ENCODE measurements at regions of chr1 and their contacts with region 1.

Region 1: GRCh38 chr1:35451125-35451528 is 106.1 kb downstream of the KIAA0319L start:
- DNase-seq: no peak
- ATAC-seq: peak; percentile 99
- H3K4me3 ChIP-seq: no peak overlapping the region
- H3K27ac ChIP-seq: no peak overlapping the region
- H3K4me1 ChIP-seq: no peaks in the 10 kb centered on the region
- H3K27me3 ChIP-seq: no peaks in the 10 kb centered on the region
- CTCF ChIP-seq: peak; percentile 87 to 90 (median 88)
- EP300 ChIP-seq: no peak
- POLR2A ChIP-seq: no peak
- RAD21 ChIP-seq: peak; percentile 97

Region 2: DNA sequence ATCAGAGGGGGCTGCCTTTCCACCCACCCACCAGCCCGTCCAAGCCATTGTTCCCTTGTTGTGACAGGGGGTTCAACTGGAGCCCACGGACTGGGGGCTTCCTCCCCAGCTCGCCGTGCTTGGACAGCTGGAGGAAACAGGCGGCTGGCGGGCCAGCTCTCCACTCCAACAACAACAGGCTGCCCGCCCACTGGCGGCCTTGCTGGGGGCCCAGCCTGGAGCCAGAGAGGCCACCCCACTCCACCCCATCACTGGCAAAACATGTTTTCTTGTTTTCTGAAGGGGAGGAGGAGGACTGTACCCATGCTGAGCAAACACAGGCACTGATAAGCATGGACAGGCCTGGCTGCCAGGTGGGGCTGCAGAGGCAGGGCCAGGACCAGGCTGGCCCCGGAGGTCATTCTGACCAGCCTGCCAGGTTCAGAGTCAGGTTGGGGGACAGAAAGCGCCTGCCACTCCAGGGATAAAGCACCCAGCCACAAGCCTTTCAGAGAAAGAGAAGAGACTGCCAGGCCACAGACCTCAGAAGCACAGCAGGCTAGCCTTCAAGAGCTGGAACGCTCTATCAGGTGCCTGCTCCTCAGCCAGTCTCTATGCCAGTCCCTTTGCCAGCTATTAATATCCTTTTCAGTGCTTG is 625.6 kb before region 1 on chr1:
- CTCF ChIA-PET with region 1: no interaction called
- POLR2A ChIA-PET with region 1: no interaction called
- RAD21 ChIA-PET with region 1: no interaction called
- SMC1A ChIA-PET with region 1: no interaction called
- in situ Hi-C with region 1: no loop called
- intact Hi-C with region 1: no loop called
- DNase-seq: no peak
- ATAC-seq: no peak
- H3K4me3 ChIP-seq: no peak overlapping the region
- H3K27ac ChIP-seq: no peak overlapping the region
- H3K4me1 ChIP-seq: no peaks in the 10 kb centered on the region
- H3K27me3 ChIP-seq: no peaks in the 10 kb centered on the region
- CTCF ChIP-seq: no peak
- EP300 ChIP-seq: no peak
- POLR2A ChIP-seq: no peak
- RAD21 ChIP-seq: no peak

Region 3: GRCh38 chr1:35215346-35215745 is 235.8 kb before region 1 on chr1:
- CTCF ChIA-PET with region 1: no interaction called
- POLR2A ChIA-PET with region 1: no interaction called
- RAD21 ChIA-PET with region 1: no interaction called
- SMC1A ChIA-PET with region 1: no interaction called
- in situ Hi-C with region 1: no loop called
- intact Hi-C with region 1: no loop called
- DNase-seq: no peak
- ATAC-seq: no peak
- H3K4me3 ChIP-seq: no peak overlapping the region
- H3K27ac ChIP-seq: no peak overlapping the region
- H3K4me1 ChIP-seq: no peaks in the 10 kb centered on the region
- H3K27me3 ChIP-seq: no peaks in the 10 kb centered on the region
- CTCF ChIP-seq: no peak
- EP300 ChIP-seq: no peak
- POLR2A ChIP-seq: no peak
- RAD21 ChIP-seq: no peak

Region 4: DNA sequence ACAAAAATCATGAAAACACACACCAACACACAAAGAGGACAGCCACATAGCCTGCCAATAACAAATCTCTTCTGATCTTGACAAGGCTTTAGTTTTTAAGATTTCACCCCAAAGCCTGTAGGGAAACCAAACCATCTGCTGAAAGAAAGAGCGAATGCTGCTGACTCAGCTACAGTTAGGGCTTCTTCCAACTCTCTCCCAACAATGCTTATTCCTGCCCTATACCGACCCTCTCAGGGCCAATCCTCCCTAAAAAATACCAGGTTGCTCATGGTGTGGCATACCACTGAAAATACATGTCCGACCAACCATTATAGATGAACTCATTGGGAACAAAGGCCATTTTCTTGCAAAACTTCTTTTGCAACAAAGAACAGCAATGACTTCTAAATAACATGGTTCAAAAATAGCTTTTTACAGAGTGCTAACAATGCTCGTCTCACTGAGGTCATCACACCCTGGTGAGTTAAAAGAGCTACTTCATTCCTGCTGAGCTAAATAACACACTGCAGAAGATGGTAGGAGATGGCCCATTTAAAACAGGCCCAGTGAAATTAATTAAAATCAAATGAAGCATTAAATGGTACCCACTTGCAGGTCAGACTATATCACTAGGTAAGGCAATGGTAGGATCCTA is 20.0 kb after region 1 on chr1:
- CTCF ChIA-PET with region 1: interaction called, 13 read pairs
- POLR2A ChIA-PET with region 1: interaction called, 3 read pairs
- RAD21 ChIA-PET with region 1: no interaction called
- SMC1A ChIA-PET with region 1: interaction called, 15 read pairs
- in situ Hi-C with region 1: no loop called
- intact Hi-C with region 1: no loop called
- DNase-seq: no peak
- ATAC-seq: no peak
- H3K4me3 ChIP-seq: no peak overlapping the region
- H3K27ac ChIP-seq: no peak overlapping the region
- H3K4me1 ChIP-seq: no peaks in the 10 kb centered on the region
- H3K27me3 ChIP-seq: no peaks in the 10 kb centered on the region
- CTCF ChIP-seq: no peak
- EP300 ChIP-seq: no peak
- POLR2A ChIP-seq: no peak
- RAD21 ChIP-seq: no peak

Region 5: GRCh38 chr1:35505908-35506798 is 55.0 kb after region 1 on chr1:
- CTCF ChIA-PET with region 1: interaction called, 34 read pairs
- POLR2A ChIA-PET with region 1: no interaction called
- RAD21 ChIA-PET with region 1: interaction called, 28 read pairs
- SMC1A ChIA-PET with region 1: interaction called, 44 read pairs
- in situ Hi-C with region 1: no loop called
- intact Hi-C with region 1: loop called (anchors 2 kb)
- DNase-seq: peak; percentile 95
- ATAC-seq: peak; percentile 84
- H3K4me3 ChIP-seq: peak overlapping the region; percentile 68; the same call in 1 of the 2 replicates
- H3K27ac ChIP-seq: peak overlapping the region; percentile 94
- H3K4me1 ChIP-seq: peaks cover 40% of the 10 kb centered on the region
- H3K27me3 ChIP-seq: no peaks in the 10 kb centered on the region
- CTCF ChIP-seq: no peak; a peak in 2 of 6 replicates
- EP300 ChIP-seq: peak in 1 of 2 experiments; percentile 62; a peak in 3 of 4 replicates
- POLR2A ChIP-seq: no peak; the same call in 1 of the 2 replicates
- RAD21 ChIP-seq: no peak

Region 6: GRCh38 chr1:35539073-35539823 is 88.1 kb after region 1 on chr1:
- CTCF ChIA-PET with region 1: interaction called, 260 read pairs
- POLR2A ChIA-PET with region 1: interaction called, 9 read pairs
- RAD21 ChIA-PET with region 1: interaction called, 139 read pairs
- SMC1A ChIA-PET with region 1: interaction called, 254 read pairs
- in situ Hi-C with region 1: no loop called
- intact Hi-C with region 1: no loop called
- DNase-seq: peak; percentile 75
- ATAC-seq: peak; percentile 73
- H3K4me3 ChIP-seq: peak overlapping the region; percentile 39
- H3K27ac ChIP-seq: peak overlapping the region; percentile 87
- H3K4me1 ChIP-seq: peaks cover 27% of the 10 kb centered on the region
- H3K27me3 ChIP-seq: no peaks in the 10 kb centered on the region
- CTCF ChIP-seq: no peak
- EP300 ChIP-seq: no peak
- POLR2A ChIP-seq: peak; percentile 41
- RAD21 ChIP-seq: no peak

Region 7: DNA sequence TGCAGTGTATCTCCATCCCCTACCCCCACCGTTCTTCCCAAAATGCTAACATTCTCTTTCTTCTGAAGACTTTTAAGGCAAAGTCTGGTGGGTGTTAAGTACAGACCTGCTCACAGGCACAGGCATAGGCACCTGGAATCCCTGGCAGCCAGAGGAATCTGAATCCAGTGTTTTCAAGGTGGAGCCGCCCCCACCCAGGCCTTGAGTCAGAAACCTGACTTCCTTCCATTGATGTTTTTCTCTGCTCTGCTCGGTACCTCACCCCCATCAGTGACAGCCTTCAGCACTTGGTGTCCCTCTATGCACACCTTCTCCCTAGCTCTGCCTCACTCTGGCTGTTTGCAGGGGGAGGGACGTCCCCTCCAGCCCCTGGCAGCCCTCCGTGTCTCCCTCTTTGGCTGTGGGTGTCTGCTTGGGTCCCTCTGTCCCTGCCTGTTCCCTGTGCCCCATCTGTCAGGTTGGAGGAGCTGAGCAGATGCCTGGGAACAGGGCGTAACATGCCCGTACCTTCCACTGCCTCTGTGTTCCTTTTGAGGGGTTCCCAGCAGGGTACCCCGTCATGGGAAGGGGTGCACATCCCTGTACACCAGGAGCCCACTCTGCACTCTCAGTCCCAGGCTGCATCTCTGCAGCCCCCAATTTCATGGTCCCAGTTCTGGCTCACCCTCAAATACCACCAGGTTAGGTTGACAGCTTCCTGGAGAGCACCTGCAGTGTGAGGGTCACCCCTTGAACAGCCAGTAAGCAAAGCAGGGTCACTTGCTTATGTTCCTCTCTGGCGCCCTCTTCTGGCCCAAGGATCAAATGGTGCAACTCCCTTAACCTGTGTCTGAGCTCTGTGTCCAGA is 113.1 kb after region 1 on chr1:
- CTCF ChIA-PET with region 1: interaction called, 248 read pairs
- POLR2A ChIA-PET with region 1: interaction called, 6 read pairs
- RAD21 ChIA-PET with region 1: interaction called, 128 read pairs
- SMC1A ChIA-PET with region 1: interaction called, 128 read pairs
- in situ Hi-C with region 1: loop called (anchors 5 kb)
- intact Hi-C with region 1: loop called (anchors 1 kb)
- DNase-seq: no peak
- ATAC-seq: peak; percentile 88
- H3K4me3 ChIP-seq: no peak overlapping the region
- H3K27ac ChIP-seq: no peak overlapping the region
- H3K4me1 ChIP-seq: no peaks in the 10 kb centered on the region; the same call in 1 of the 2 replicates
- H3K27me3 ChIP-seq: no peaks in the 10 kb centered on the region
- CTCF ChIP-seq: peak; percentile 77 to 88 (median 82)
- EP300 ChIP-seq: no peak
- POLR2A ChIP-seq: no peak
- RAD21 ChIP-seq: peak; percentile 85

Region 8: DNA sequence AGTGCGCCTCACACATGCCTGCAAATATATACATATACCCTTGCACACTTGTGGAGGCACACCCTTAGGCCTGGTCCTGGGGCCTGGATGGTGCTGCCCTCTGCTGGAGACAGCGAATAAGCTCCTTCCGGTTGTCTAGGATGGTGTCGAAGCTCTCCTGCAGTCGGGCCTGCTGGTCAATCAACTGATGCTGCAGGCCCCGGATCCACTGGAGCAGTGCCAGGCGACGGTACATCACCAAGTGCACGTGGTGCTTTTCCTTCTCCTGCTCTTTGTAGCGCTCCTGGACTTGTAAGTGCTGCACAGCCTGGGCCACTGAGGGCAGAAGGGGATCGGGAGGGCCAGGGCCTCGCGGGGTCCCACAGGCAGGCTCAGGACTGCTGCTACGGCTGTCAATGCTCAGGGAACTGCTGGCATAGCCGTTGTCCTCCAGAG is 264.5 kb after region 1 on chr1:
- CTCF ChIA-PET with region 1: interaction called, 34 read pairs
- POLR2A ChIA-PET with region 1: no interaction called
- RAD21 ChIA-PET with region 1: interaction called, 22 read pairs
- SMC1A ChIA-PET with region 1: interaction called, 9 read pairs
- in situ Hi-C with region 1: loop called (anchors 5 kb)
- intact Hi-C with region 1: loop called (anchors 5 kb)
- DNase-seq: peak; percentile 42
- ATAC-seq: peak; percentile 80
- H3K4me3 ChIP-seq: no peak overlapping the region
- H3K27ac ChIP-seq: no peak overlapping the region
- H3K4me1 ChIP-seq: peaks cover 5% of the 10 kb centered on the region
- H3K27me3 ChIP-seq: no peaks in the 10 kb centered on the region
- CTCF ChIP-seq: peak; percentile 88 to 92 (median 92); a peak in 5 of 6 replicates
- EP300 ChIP-seq: no peak
- POLR2A ChIP-seq: no peak
- RAD21 ChIP-seq: peak; percentile 82

Region 9: DNA sequence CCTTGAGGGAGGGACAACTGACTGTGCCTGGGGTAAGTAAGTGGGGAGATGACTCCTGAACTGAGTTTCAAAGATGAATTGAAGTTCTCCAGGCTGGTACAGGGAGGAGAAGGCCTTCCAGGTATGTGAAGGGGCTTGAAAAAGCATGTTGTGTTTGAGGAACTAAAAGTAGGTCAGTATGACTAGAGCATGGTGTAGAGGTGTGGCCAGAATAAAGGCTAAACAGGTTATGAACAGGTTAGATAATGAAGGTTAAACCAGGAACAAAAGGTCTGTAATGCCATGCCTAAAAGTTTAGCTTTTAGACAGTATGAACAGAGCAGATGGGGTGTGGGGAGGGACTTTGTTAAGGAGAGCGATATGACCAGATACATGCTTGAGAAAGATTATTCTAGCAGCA is 326.0 kb after region 1 on chr1:
- CTCF ChIA-PET with region 1: interaction called, 16 read pairs
- POLR2A ChIA-PET with region 1: no interaction called
- RAD21 ChIA-PET with region 1: interaction called, 3 read pairs
- SMC1A ChIA-PET with region 1: interaction called, 13 read pairs
- in situ Hi-C with region 1: no loop called
- intact Hi-C with region 1: loop called (anchors 5 kb)
- DNase-seq: no peak
- ATAC-seq: peak; percentile 52
- H3K4me3 ChIP-seq: no peak overlapping the region
- H3K27ac ChIP-seq: no peak overlapping the region
- H3K4me1 ChIP-seq: peaks cover 9% of the 10 kb centered on the region
- H3K27me3 ChIP-seq: no peaks in the 10 kb centered on the region
- CTCF ChIP-seq: no peak
- EP300 ChIP-seq: no peak
- POLR2A ChIP-seq: no peak
- RAD21 ChIP-seq: no peak

Measured in GM12878 (cell line).